Heart right ventricle (tissue), 16 donors: ENCODE measurements at regions of chr11 and their contacts with region 1.

Region 1: DNA sequence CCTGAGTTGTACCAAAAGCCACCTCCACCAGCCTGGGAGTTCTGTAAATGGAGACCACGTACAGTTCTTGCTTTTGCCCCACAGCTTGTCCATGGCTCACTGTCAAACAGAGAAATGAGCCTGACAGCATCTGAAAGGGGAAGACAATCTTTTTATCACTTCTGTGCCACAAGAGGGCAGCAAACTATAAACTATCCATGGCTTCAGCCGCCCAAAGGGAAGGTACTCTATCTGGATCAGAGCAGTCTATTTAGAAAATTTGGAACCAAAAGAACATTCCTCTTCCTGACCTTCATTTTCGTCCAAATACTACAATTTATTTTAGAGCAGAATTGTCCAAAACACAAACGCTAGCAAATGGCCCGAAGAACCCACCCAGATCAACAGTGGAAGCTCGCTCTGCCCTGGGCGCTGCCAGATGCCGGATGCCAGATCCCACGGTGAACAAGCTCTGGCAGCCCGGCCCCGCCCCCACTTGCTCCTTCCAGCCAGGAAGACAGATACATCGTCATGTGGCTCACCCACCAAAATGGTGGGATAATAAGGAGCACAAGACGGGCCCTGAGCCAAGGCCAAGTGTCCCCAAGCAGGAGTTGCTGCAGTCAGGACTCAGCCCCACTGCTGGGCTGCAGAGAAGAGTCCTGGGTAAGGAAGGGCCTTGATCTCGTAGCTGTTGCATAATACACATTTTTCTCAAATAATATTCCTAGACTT is 23.9 kb upstream of the SCGB1A1 start:
- DNase-seq: peak; percentile 81 to 82
- ATAC-seq: peak; percentile 77 to 88 (median 84)
- H3K4me3 ChIP-seq: peak overlapping the region in 9 of 10 donors; percentile 25 to 55 (median 48)
- H3K27ac ChIP-seq: peak overlapping the region; percentile 38 to 84 (median 74)
- H3K4me1 ChIP-seq: peaks cover 21 to 54% (median 39%) of the 10 kb centered on the region in 9 donors
- H3K27me3 ChIP-seq: no peaks in the 10 kb centered on the region
- CTCF ChIP-seq: peak; percentile 59 to 86 (median 74)

Region 2: GRCh38 chr11:62427630-62428233 is 32.8 kb after region 1 on chr11:
- intact Hi-C with region 1: loop called in 2 of 10 experiments (anchors 2 to 5 kb)
- DNase-seq: no peak
- ATAC-seq: no peak
- H3K4me3 ChIP-seq: no peak overlapping the region
- H3K27ac ChIP-seq: peak overlapping the region in 1 of 10 donors; percentile 72
- H3K4me1 ChIP-seq: peaks cover 0 to 75% (median 9%) of the 10 kb centered on the region in 9 donors
- H3K27me3 ChIP-seq: no peaks in the 10 kb centered on the region
- CTCF ChIP-seq: no peak

Region 3: GRCh38 chr11:62508268-62509058 is 113.5 kb after region 1 on chr11:
- intact Hi-C with region 1: loop called in 1 of 10 experiments (anchors 5 kb)
- DNase-seq: peak; percentile 76 to 80
- ATAC-seq: peak; percentile 78 to 93 (median 89)
- H3K4me3 ChIP-seq: peak overlapping the region in 4 of 10 donors; percentile 19 to 29 (median 21)
- H3K27ac ChIP-seq: peak overlapping the region; percentile 1 to 89 (median 76)
- H3K4me1 ChIP-seq: peaks cover 7 to 67% (median 45%) of the 10 kb centered on the region in 9 donors
- H3K27me3 ChIP-seq: no peaks in the 10 kb centered on the region
- CTCF ChIP-seq: peak; percentile 6 to 71 (median 45)

Region 4: GRCh38 chr11:62556108-62556871 is 161.3 kb after region 1 on chr11:
- intact Hi-C with region 1: loop called in 6 of 10 experiments (anchors 1 to 10 kb)
- DNase-seq: peak; percentile 84 to 88
- ATAC-seq: peak; percentile 58 to 73 (median 68)
- H3K4me3 ChIP-seq: peak overlapping the region in 3 of 10 donors; percentile 7 to 30 (median 13)
- H3K27ac ChIP-seq: peak overlapping the region; percentile 61 to 98 (median 92)
- H3K4me1 ChIP-seq: peaks cover 41 to 95% (median 80%) of the 10 kb centered on the region in 9 donors
- H3K27me3 ChIP-seq: no peaks in the 10 kb centered on the region
- CTCF ChIP-seq: no peak

Region 5: DNA sequence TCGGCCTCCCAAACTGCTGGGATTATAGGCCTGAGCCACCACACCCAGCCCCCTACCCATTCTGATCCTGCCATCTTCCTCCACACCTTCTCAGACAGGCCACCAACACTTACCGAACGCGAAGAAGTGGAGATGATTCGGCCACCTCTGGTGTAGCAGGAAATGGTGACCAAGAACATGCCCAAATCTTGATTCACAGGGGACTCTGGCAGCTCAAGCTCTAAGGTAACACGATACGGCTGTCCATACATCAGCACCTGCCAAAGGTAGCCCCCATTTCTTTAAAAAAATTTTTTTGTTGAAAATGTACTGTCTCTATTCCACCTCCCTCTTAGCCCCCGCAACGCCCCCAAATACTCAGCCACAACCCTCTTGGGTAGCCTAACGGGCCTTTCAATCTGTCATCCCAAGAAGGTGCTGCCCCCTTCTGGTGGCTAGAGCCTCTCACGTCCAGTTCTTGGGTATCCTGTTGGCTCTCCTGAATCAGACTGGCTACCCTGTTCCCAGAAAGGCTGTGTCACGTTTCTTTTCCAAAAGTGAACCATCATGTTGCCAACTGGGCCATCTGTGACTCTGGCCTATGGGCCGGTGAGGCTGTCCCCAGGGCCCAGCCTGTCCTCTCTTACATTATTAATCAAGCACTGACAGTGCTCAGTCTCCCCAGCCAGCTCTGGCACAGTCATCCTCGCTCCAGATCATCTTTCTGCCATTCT is 299.6 kb after region 1 on chr11:
- intact Hi-C with region 1: loop called in 8 of 10 experiments (anchors 5 to 10 kb)
- DNase-seq: peak; percentile 71 to 84
- ATAC-seq: peak; percentile 71 to 85 (median 78)
- H3K4me3 ChIP-seq: no peak overlapping the region
- H3K27ac ChIP-seq: peak overlapping the region in 4 of 10 donors; percentile 15 to 44 (median 19)
- H3K4me1 ChIP-seq: peaks cover 0 to 22% (median 16%) of the 10 kb centered on the region in 9 donors
- H3K27me3 ChIP-seq: no peaks in the 10 kb centered on the region
- CTCF ChIP-seq: peak; percentile 60 to 92 (median 87)

Region 6: GRCh38 chr11:62860835-62861563 is 466.0 kb after region 1 on chr11:
- intact Hi-C with region 1: loop called in 3 of 10 experiments (anchors 5 to 10 kb)
- DNase-seq: no peak
- ATAC-seq: no peak
- H3K4me3 ChIP-seq: no peak overlapping the region
- H3K27ac ChIP-seq: no peak overlapping the region
- H3K4me1 ChIP-seq: peaks cover 0 to 24% (median 6%) of the 10 kb centered on the region in 9 donors
- H3K27me3 ChIP-seq: no peaks in the 10 kb centered on the region
- CTCF ChIP-seq: no peak